Ascending aorta (tissue), 2 donors: ENCODE measurements at regions of chr12 and their contacts with region 1.

Region 1: DNA sequence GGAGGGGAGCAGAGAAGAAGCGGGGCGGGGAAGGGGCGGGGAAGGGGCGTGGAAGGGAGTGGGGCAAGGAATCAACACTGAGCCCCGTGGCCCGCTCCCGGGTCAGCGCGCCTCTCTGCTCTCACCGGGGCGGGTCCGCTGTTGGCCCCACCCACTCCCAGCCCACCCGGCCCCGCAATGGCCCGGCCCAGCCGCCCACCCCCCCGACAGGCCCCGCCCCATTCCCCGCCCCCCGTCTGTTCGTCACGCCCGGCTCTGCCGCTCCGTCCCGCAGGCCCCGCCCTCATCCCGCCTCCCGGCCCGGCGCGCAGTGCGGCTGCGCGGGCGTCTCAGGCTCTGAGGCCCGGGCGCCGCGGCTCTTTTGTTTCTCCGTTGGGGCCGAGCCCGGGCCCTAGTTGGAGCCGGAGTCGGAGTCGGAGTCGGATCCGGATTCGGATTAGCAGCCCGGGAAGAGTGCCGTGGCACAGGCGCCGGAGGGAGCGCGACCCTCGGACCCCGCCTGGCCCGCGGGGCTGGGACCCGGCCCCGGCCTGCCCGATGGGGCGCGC is at the start of gene ULK1:
- DNase-seq: peak; percentile 65 to 96
- H3K4me3 ChIP-seq: peak within 1 kb of the TSS; percentile 62 to 77
- H3K27ac ChIP-seq: peak within 1 kb of the TSS; percentile 93
- H3K4me1 ChIP-seq: peaks cover 5 to 11% of the 10 kb centered on the region in 2 donors
- H3K27me3 ChIP-seq: no peaks in the 10 kb centered on the region
- CTCF ChIP-seq: no peak
- total RNA-seq, gene ULK1: 156 TPM

Region 2: GRCh38 chr12:131710464-131711457 is 183.6 kb before region 1 on chr12 and contains the start of gene SFSWAP:
- intact Hi-C with region 1: loop called (anchors 5 kb)
- DNase-seq: peak in 1 of 2 donors; percentile 78
- H3K4me3 ChIP-seq: peak within 1 kb of the TSS; percentile 69 to 73
- H3K27ac ChIP-seq: peak within 1 kb of the TSS; percentile 86 to 96
- H3K4me1 ChIP-seq: peaks cover 8 to 16% of the 10 kb centered on the region in 2 donors
- H3K27me3 ChIP-seq: no peaks in the 10 kb centered on the region
- CTCF ChIP-seq: no peak
- total RNA-seq, gene SFSWAP: 15.8 TPM

Region 3: GRCh38 chr12:131912518-131913294 is 18.3 kb after region 1 on chr12:
- intact Hi-C with region 1: loop called (anchors 1 kb)
- DNase-seq: peak; percentile 63 to 94
- H3K4me3 ChIP-seq: no peak overlapping the region
- H3K27ac ChIP-seq: peak overlapping the region; percentile 9 to 66
- H3K4me1 ChIP-seq: peaks cover 4 to 10% of the 10 kb centered on the region in 2 donors
- H3K27me3 ChIP-seq: no peaks in the 10 kb centered on the region
- CTCF ChIP-seq: no peak

Region 4: DNA sequence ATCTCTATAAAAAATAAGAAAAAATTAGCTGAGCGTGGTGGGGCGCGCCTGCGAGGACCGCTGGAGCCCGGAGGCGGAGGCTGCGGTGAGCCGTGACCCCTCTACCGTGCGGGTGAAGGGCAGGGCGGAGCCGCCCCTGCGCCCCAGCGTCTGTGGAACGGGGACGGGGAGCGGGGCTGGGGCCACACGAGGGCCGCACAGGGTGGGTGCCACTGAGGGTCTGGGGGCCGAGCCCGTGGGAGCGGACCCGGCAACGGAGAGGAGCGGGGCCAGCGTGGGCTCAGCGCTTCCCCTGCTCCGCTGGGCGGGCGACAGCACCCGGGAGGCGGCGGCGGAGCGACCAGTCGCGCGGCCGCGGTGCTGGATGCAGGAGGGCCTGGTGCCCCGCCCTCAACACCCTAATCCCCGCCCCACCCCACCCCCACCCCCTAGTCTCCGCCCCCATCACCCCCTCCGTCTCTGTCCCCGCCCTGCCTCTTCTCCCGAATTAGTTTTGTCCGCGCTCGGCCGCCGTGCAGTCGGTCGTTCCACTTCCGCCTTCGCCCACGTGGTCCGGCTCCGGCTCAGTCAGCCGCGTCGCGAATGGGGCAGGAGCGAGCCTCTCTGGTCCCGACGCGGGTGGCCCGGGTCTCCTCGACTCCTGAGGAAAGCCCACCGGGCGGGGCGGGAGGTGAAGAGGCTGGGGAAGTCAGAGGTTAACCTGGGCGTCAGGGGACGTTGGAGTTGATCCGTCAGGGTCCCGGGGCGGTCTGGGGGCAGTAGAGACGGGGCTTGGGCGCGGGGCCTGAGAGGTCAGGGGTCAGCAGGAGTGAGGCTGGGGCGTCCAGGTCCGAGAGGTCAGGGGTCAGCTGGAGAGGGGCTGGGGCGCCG is 34.6 kb after region 1 on chr12 and contains the start of gene PUS1:
- intact Hi-C with region 1: loop called (anchors 1 kb)
- DNase-seq: peak; percentile 67 to 95
- H3K4me3 ChIP-seq: peak within 1 kb of the TSS; percentile 58 to 80
- H3K27ac ChIP-seq: peak within 1 kb of the TSS; percentile 70 to 74
- H3K4me1 ChIP-seq: peaks cover 8 to 12% of the 10 kb centered on the region in 2 donors
- H3K27me3 ChIP-seq: no peaks in the 10 kb centered on the region
- CTCF ChIP-seq: no peak
- total RNA-seq, gene PUS1: 22.7 TPM

Region 5: DNA sequence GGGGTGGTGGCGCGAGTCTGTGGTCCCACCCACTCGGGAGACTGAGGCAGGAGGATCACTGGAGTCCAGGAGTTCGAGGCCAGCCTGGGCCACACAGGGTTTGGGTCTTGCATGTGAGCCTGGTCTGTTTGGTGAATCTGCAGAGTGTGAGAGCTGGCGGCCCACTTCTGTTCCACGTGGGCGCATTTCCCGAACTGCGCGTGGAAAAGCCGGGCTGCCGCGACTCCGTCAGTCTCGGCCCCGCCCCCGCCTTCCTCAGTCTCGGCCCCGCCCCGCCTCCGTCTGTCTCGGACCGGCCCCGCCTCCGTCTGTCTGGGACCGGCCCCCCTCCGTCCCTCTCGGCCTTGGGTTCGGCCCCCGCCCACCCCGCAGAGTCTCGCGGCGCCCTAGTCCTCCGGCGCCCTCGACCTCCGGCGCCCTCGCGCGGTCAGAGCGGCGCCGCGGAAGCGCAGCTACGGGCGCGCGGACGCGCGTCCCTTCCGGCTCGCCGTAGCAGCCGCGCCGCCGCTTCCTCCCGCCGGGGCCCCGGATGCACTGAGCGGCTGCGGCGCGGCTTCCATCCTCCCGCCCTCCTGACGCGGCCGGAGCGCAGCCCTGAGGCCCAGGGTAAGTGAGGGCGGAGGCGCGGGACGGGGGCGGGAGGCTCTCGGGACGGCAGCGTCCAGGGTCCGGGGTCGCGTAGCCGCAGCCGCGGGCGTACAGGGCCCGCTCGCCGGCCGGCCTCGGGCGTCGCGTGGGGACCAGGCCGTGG is 55.2 kb after region 1 on chr12 and contains the start of gene EP400:
- intact Hi-C with region 1: loop called (anchors 1 kb)
- DNase-seq: peak; percentile 82 to 98
- H3K4me3 ChIP-seq: peak within 1 kb of the TSS; percentile 76 to 94
- H3K27ac ChIP-seq: peak within 1 kb of the TSS; percentile 83 to 93
- H3K4me1 ChIP-seq: peaks cover 3 to 20% of the 10 kb centered on the region in 2 donors
- H3K27me3 ChIP-seq: no peaks in the 10 kb centered on the region
- CTCF ChIP-seq: peak; percentile 30 to 70 (median 58)
- total RNA-seq, gene EP400: 23.3 TPM

Region 6: DNA sequence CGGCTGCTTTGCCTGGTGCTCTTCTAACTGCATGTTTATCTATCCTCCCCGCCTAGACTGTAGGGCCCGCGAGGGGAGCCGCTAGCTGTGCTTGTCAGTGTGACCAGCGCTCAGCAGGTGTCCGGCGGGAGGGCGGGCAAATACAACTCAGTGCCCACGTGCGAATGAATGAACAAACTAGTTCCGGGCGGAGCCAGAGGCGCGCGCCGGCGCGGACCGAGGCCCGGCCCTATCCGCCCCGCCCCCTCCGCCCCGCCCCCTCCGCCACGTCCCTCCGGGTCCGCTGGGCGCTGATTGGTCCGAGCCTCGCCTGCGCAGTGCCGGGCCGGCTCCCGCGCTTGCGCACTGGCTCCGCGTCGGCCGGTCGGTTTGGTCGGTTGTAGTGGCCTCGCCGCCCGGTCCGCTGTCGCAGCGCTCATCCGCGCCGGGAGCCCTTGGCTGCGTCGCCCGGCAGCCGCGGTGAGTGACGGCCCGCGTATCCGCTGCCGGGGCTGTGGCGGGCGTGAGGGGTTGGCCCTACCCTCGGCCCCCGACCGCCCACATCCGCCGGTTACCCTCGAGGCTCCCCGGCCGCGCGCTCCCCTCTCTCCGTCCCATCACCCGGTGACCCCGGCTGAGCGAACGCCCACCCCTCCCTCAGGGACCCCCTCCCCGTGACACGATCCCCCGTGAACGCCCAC is 189.7 kb after region 1 on chr12:
- intact Hi-C with region 1: loop called (anchors 1 kb)
- DNase-seq: peak; percentile 69 to 94
- H3K4me3 ChIP-seq: peak overlapping the region; percentile 75 to 82
- H3K27ac ChIP-seq: peak overlapping the region; percentile 88 to 93
- H3K4me1 ChIP-seq: peaks cover 4 to 16% of the 10 kb centered on the region in 2 donors
- H3K27me3 ChIP-seq: no peaks in the 10 kb centered on the region
- CTCF ChIP-seq: no peak

Region 7: GRCh38 chr12:132144115-132144812 is 249.9 kb after region 1 on chr12 and contains the starts of genes DDX51 and NOC4L:
- intact Hi-C with region 1: loop called (anchors 10 kb)
- DNase-seq: peak; percentile 74 to 96
- H3K4me3 ChIP-seq: peak within 1 kb of the TSS; percentile 97 to 99
- H3K27ac ChIP-seq: peak within 1 kb of the TSS; percentile 91 to 93
- H3K4me1 ChIP-seq: peaks cover 4 to 16% of the 10 kb centered on the region in 2 donors
- H3K27me3 ChIP-seq: no peaks in the 10 kb centered on the region
- CTCF ChIP-seq: no peak
- total RNA-seq, gene DDX51: 4.3 TPM
- total RNA-seq, gene NOC4L: 9.2 TPM